Activated B cell treated with CpG ODN at 0.5 μM for 24 hours (primary cell): ENCODE measurements at regions of chr20 and their contacts with region 1.

Region 1: DNA sequence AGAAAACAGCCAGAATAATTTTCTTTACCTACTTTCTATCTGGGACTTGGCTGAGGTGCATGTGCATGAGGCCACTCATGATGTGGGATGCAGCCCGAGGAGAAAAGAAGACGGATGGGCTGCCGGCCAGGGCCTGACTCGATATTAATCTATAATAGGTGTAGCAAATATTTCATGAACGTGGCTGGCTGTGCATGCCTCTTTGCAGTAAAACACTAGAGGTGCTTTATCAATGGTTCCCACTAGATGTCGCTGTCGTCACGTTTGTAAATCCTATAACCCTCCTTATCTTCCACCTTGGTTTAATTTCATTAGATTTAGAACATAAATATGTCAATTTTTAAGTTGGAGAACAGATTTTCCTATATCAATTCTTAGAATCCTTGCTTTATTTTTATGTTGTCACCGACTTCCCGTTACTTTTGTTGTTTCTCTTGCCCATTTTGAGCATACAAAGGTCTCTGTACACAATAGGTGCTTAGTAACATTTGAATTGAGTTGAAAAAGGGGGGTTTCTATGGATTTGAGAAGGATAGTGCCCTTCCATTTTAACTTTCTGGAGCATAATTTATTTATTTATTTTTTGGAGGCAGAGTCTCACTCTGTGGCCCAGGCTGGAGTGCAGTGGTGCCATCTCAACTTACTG is 19.6 kb upstream of the FERMT1 start:
- DNase-seq: no peak
- ATAC-seq: no peak
- H3K4me3 Mint-ChIP-seq: no peak overlapping the region
- H3K27ac Mint-ChIP-seq: no peak overlapping the region
- H3K4me1 Mint-ChIP-seq: no peaks in the 10 kb centered on the region
- H3K27me3 Mint-ChIP-seq: peaks cover under 1% of the 10 kb centered on the region
- CTCF ChIP-seq: peak; percentile 41

Region 2: GRCh38 chr20:5667705-5668528 is 474.6 kb before region 1 on chr20:
- CTCF ChIA-PET with region 1: no interaction called
- POLR2A ChIA-PET with region 1: no interaction called
- intact Hi-C with region 1: no loop called
- DNase-seq: no peak
- ATAC-seq: peak; percentile 77
- H3K4me3 Mint-ChIP-seq: no peak overlapping the region
- H3K27ac Mint-ChIP-seq: no peak overlapping the region
- H3K4me1 Mint-ChIP-seq: peaks cover 30% of the 10 kb centered on the region
- H3K27me3 Mint-ChIP-seq: no peaks in the 10 kb centered on the region
- CTCF ChIP-seq: no peak

Region 3: DNA sequence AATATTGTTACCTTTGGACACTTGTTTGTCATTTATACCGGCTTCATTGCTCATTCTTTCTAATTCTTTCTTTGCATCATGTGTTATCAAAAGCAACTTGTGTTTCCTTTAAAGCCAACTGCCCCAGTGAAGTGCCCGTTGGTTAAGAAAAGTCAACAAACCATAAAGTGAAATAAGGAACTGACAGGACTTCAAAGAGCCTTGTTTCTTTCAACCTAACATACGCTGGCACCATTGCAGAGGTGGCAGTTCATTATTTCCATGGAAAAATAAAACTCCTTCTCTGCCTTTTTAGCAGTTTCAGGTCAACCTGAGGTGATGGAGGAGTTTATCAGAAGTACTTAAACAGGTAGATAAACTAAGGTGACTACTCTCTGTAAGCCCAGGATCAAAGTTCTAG is 48.4 kb before region 1 on chr20:
- CTCF ChIA-PET with region 1: no interaction called
- POLR2A ChIA-PET with region 1: no interaction called
- intact Hi-C with region 1: no loop called
- DNase-seq: no peak
- ATAC-seq: no peak
- H3K4me3 Mint-ChIP-seq: no peak overlapping the region
- H3K27ac Mint-ChIP-seq: no peak overlapping the region
- H3K4me1 Mint-ChIP-seq: peaks cover 4% of the 10 kb centered on the region
- H3K27me3 Mint-ChIP-seq: peaks cover 9% of the 10 kb centered on the region
- CTCF ChIP-seq: no peak

Region 4: DNA sequence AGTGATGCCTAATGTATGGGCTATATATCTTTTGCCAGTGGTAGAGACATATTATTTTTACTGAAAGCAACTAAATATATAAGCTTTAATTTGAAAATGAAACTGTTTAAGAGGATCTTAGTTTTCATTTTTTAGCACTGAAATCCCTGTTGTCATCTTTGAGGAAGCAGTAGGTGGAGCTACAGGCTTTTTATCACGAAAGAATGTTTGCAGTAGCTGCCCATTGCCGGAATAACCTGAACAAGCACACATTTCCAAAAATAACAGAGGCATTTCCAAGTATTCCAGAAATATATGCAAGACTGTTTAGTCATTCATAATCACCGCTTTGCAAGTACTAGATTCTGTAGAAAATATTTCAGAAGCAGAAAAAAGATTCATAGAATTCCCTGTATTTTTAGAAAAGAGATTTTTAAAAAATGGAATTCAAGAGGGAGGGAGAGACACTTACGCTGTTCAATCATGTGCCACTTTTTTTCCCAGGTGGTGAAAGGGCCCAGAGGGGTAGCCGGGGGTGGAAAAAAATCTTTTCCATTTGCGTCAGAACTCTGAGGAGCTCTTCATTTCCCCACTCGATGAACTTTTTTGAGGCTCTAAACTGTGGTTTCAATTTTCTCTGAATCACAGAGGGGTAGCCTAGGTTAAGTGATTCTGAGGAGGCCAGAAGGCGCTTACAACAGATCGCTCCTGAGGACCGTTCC is 122.9 kb after region 1 on chr20:
- CTCF ChIA-PET with region 1: no interaction called
- POLR2A ChIA-PET with region 1: no interaction called
- intact Hi-C with region 1: no loop called
- DNase-seq: no peak
- ATAC-seq: no peak
- H3K4me3 Mint-ChIP-seq: no peak overlapping the region
- H3K27ac Mint-ChIP-seq: no peak overlapping the region
- H3K4me1 Mint-ChIP-seq: no peaks in the 10 kb centered on the region
- H3K27me3 Mint-ChIP-seq: no peaks in the 10 kb centered on the region
- CTCF ChIP-seq: no peak

Region 5: DNA sequence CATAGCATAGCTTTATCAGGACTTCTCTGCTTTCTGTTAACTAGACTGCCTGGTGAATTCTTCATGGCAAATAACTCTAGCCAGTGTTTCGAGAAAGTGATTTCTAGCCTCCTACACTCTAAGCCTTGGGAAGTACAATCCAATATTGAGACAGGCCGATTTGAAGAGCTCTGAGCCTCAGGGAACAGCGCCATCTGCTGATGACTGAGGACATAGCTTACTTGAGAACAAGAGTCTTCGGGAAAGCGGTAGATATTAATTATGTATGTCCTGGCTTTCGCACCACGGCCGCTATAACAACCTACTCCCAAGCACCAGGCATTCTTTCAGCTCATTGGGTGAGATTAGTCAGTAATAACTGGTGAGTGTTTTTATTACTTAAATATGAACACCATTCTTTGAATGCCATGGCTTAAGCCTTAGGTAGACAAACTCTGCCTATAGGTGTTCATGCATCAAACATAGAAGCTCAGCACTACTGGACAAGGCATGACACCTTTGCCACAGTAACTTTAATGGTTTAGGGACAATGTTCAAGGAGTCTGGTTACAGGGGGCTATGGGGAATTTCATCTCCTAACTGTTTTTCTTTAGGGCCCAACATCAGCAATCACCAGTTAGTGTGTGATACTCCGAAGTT is 1143.6 kb after region 1 on chr20:
- CTCF ChIA-PET with region 1: no interaction called
- POLR2A ChIA-PET with region 1: no interaction called
- intact Hi-C with region 1: loop called (anchors 5 kb)
- DNase-seq: no peak
- ATAC-seq: no peak
- H3K4me3 Mint-ChIP-seq: no peak overlapping the region
- H3K27ac Mint-ChIP-seq: no peak overlapping the region
- H3K4me1 Mint-ChIP-seq: no peaks in the 10 kb centered on the region
- H3K27me3 Mint-ChIP-seq: no peaks in the 10 kb centered on the region
- CTCF ChIP-seq: no peak

Region 6: GRCh38 chr20:7375905-7376304 is 1233.4 kb after region 1 on chr20:
- CTCF ChIA-PET with region 1: no interaction called
- POLR2A ChIA-PET with region 1: no interaction called
- intact Hi-C with region 1: loop called (anchors 5 kb)
- DNase-seq: no peak
- ATAC-seq: no peak
- H3K4me3 Mint-ChIP-seq: no peak overlapping the region
- H3K27ac Mint-ChIP-seq: no peak overlapping the region
- H3K4me1 Mint-ChIP-seq: no peaks in the 10 kb centered on the region
- H3K27me3 Mint-ChIP-seq: no peaks in the 10 kb centered on the region
- CTCF ChIP-seq: no peak